ENCODE measurements at regions of chr9 and their contacts with region 1.

Region 1: DNA sequence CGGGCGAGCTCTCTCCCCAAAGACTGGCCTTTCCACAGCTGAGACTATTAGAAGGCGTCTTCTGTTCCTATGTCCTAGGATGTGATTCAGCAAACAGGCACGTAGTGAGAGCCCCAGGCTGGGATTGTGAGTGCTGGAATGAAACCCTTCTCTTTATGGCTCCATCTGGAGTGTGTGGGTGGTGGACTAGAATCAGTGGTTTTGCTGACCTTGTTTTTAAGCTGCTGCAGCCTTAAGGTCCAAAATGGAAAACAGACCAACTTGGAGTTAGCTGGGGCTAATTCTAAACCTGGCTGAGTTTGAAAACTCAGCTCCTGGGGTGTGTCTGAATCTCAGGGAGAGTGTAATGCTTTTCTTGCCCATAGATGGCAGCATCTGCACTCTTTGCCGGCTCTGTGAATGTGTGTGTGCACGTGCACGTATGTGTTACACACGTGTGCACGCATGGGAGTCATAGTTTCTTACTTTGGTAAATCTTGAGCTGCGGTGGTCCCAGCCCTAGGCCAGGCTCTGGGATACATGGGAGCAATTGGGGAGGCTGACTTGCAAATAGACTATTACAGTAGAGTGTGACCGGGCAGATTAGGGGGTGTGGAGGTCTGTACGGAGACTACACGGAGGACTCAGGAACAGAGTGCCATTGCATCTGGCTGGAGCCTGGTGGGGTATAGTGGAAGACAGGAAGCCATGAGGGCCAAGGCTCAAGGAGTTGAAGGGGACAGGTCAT is 10.7 kb downstream of the GSN start:
- DNase-seq: peak; percentile 73
- ATAC-seq: peak; percentile 93
- H3K4me3 Mint-ChIP-seq: no peak overlapping the region
- H3K27ac Mint-ChIP-seq: no peak overlapping the region
- H3K4me1 Mint-ChIP-seq: peaks cover 5% of the 10 kb centered on the region
- H3K27me3 Mint-ChIP-seq: no peaks in the 10 kb centered on the region
- CTCF ChIP-seq: peak; percentile 88

Region 2: DNA sequence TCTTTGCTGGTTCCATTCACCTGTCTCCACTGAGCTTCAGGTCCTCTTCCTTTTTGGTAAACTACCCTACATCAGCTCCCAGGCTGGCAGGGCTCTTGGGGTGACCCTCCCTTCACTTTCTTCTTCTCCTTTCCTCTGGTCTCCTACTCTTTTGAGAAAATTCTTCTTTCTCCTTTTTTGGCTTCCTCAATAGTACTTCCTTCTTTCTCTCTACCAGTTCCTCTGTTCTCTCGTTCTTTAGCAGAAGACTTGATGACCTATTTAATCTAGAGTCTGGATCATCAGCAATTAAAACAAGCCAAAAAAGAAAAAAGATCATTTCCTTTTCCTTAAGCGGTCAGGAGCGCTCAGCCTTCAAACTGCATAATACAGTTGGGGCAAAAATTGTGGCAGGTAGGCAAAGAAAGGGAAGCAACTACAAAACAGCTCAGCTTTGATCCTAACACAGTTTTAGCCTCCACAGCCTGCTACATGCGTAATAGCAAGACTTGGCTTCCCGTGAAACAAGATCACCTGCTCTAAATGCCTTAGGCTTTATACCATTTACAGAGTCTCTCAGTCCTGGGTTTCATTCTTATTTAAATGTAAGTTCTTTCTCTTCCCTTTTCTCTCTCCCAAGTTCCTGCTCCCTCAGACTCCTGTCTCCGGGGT is 24.8 kb before region 1 on chr9:
- CTCF ChIA-PET with region 1: interaction called, 12 read pairs
- POLR2A ChIA-PET with region 1: no interaction called
- intact Hi-C with region 1: no loop called
- DNase-seq: no peak
- ATAC-seq: no peak
- H3K4me3 Mint-ChIP-seq: no peak overlapping the region
- H3K27ac Mint-ChIP-seq: no peak overlapping the region
- H3K4me1 Mint-ChIP-seq: no peaks in the 10 kb centered on the region
- H3K27me3 Mint-ChIP-seq: no peaks in the 10 kb centered on the region
- CTCF ChIP-seq: no peak

Region 3: GRCh38 chr9:121267689-121268597 is 10.8 kb before region 1 on chr9 and contains the start of gene GSN:
- CTCF ChIA-PET with region 1: interaction called, 24 read pairs
- POLR2A ChIA-PET with region 1: interaction called, 5 read pairs
- intact Hi-C with region 1: no loop called
- DNase-seq: peak; percentile 56
- ATAC-seq: peak; percentile 86
- H3K4me3 Mint-ChIP-seq: peak within 1 kb of the TSS; percentile 50
- H3K27ac Mint-ChIP-seq: no peak within 1 kb of the TSS
- H3K4me1 Mint-ChIP-seq: peaks cover 13% of the 10 kb centered on the region
- H3K27me3 Mint-ChIP-seq: peaks cover 13% of the 10 kb centered on the region
- CTCF ChIP-seq: no peak
- total RNA-seq, gene GSN: 1.9 to 2.2 TPM